AG04449 (cell line): ENCODE measurements at regions of chr2 and their contacts with region 1.

Region 1: DNA sequence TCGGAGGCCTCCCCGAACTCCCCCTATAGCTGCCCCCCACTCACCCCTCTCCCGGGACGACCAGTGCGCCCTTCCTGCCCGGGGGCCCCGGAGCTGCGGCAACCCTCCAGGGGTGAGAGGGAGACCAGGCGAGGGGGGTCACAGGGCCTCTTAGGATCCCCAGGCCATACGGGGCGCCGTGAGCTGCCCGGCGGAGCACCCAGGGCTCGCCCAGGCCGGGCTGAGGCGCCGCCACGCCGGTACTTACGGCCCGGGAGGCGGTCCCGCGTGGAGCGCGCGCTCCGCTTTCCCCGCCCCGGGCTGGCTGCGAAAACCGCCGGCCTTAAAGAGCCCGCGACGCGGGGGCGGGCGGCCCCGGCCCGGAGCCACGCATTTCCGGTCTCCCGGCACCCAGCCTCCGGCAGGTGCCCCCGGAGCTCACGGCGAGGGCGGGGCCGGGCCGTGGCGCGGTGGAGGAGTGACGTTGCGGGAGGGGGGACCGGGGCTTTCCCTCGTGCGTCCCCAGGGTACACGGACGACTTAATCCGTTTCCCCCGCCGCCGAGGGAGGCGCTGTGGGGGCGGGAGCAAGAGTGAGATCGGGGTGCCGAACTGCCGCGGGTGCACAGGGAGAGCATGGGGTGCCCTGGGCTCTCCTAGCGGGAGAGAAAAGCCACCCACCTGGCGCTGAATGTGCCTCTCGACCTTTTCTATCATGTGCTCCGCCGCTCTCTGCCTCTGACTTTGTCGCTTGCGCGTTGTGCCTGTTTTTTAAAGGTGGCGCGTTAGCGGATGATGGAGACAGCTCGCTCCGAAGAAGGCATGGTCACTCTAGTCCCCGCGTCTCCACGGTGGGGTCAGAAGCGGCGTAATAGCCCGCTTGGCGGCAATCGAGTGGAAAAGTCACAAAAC is at the start of gene METTL21A:
- DNase-seq: no peak
- H3K4me3 ChIP-seq: peak within 1 kb of the TSS; percentile 74
- CTCF ChIP-seq: peak; percentile 68

Region 2: DNA sequence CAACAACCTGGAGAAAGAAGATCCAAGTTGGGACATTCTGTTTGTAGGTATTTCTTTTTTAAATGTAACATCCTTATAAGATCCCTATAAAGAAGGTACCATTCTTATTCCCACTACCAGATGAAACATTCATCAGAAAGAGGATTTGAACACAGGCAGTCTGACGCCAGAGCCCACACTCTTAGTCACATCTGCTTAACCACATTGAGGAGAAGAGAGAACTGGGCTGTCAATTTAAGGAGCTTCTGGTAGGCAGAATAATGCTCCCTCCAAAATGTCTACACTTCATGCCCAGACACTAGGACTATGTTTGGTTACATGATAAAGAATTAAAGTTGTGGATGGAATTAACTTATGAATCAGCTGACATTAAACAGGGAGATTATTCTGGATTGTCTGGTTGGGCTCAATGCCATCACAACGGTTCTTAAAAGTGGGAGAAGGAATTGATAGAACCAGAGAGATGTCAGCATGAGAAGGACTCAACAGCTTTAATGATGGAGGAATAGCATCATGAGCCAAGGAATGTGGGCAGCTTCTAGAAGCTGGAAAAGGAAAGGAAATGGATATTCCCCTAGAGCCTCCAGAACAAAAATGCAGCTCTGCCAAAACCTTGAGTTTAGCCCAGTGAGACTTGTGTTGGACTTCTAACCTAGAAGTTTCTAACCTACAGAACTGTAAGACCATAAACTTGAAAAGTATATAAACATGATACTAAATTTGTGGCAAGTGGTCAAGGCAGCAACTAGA is 541.7 kb before region 1 on chr2:
- CTCF ChIA-PET with region 1: no interaction called
- POLR2A ChIA-PET with region 1: no interaction called
- DNase-seq: no peak
- H3K4me3 ChIP-seq: no peak overlapping the region
- CTCF ChIP-seq: no peak

Region 3: DNA sequence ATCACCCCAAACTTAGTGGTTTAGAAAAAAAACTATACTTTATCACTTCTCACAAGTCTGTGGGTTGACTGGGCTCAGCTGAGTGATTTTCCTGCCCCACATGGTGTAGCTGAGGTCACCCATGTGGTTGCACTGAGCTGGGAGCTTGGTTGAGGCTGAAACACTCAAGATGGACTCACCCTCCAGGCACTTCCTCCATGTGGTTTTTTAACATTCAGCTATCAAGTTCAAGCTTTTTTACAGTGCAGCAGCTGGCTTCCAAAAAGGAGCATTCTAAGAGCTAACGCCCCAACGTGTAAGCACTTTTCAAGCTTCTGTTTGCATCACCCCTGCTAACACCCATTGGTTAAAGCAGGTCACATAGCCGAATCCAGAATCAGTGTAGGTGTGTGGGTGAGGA is 201.4 kb before region 1 on chr2:
- CTCF ChIA-PET with region 1: no interaction called
- POLR2A ChIA-PET with region 1: no interaction called
- DNase-seq: peak; percentile 65
- H3K4me3 ChIP-seq: no peak overlapping the region
- CTCF ChIP-seq: no peak

Region 4: GRCh38 chr2:207487650-207488311 is 137.5 kb before region 1 on chr2:
- CTCF ChIA-PET with region 1: interaction called, 3 read pairs
- POLR2A ChIA-PET with region 1: interaction called, 10 read pairs
- DNase-seq: peak; percentile 75
- H3K4me3 ChIP-seq: no peak overlapping the region
- CTCF ChIP-seq: peak; percentile 48

Region 5: DNA sequence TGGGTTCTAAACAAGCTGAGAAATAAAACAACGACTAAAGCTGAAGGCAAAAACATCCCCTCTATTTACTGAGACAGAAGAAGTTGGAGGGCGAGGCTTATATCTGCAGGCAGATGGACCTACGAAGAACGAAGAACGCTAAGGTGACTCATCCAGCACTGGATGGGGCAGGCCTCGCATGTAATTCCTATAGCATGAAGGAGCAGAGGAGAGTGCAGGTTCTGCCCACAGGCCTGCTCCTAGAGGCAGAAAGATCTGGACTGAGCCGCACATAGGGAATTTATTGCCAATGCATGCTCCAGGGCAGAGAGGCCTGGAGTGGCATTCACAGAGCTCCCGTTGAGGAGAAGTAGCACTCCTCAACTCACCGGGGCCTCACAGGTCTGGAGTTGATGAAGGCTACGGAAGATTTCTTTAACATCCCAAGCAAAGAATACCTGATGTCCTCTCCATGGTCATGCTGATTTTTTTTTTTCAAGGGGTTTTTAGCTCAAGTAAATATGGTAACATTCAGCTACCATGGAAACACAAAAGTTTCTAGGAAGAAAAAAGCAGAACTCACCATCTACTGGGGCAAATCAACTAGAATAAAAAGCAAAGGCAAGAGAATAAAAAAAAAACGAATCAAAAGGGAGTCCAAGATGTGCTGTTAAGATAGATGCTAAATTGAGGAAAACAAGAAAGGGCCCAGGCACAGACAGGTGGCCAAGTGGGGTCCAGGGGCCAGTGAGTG is 10.4 kb after region 1 on chr2:
- CTCF ChIA-PET with region 1: interaction called, 14 read pairs
- POLR2A ChIA-PET with region 1: interaction called, 3 read pairs
- DNase-seq: no peak
- H3K4me3 ChIP-seq: no peak overlapping the region
- CTCF ChIP-seq: no peak

Region 6: GRCh38 chr2:207734264-207734635 is 109.0 kb after region 1 on chr2:
- CTCF ChIA-PET with region 1: interaction called, 20 read pairs
- POLR2A ChIA-PET with region 1: no interaction called
- DNase-seq: no peak
- H3K4me3 ChIP-seq: no peak overlapping the region
- CTCF ChIP-seq: peak; percentile 67